ENCODE measurements at regions of chr1 and their contacts with region 1.

Region 1: DNA sequence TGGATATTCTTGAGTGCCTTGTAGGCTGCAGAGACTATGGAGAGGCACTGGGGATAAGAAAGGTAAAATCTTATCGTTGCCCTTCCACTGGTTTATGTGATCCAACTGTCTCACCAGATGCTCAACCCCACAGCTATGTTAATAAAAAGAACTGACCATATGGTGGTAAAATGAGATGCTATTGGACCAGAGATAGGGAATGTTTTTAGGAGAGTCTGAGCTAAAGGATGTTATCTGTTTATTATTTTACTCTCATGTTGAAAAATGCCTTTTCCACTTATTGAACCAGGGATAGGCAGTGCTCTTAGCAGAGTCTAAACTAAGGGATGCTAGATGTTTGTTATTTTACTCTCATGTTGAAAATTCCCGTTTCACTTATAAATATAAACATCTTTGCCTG is 172.8 kb upstream of the GREM2 start:
- DNase-seq: no peak
- ATAC-seq: no peak
- H3K4me3 ChIP-seq: no peak overlapping the region
- H3K27ac ChIP-seq: no peak overlapping the region
- H3K4me1 ChIP-seq: peaks cover 24% of the 10 kb centered on the region
- H3K27me3 ChIP-seq: no peaks in the 10 kb centered on the region
- CTCF ChIP-seq: no peak

Region 2: GRCh38 chr1:240350910-240351331 is 433.9 kb before region 1 on chr1:
- CTCF ChIA-PET with region 1: interaction called, 15 read pairs
- POLR2A ChIA-PET with region 1: no interaction called
- intact Hi-C with region 1: no loop called
- DNase-seq: peak; percentile 74
- ATAC-seq: peak; percentile 69
- H3K4me3 ChIP-seq: no peak overlapping the region
- H3K27ac ChIP-seq: no peak overlapping the region
- H3K4me1 ChIP-seq: peaks cover 13% of the 10 kb centered on the region
- H3K27me3 ChIP-seq: no peaks in the 10 kb centered on the region
- CTCF ChIP-seq: no peak

Region 3: GRCh38 chr1:240803151-240803550 is 18.4 kb after region 1 on chr1:
- CTCF ChIA-PET with region 1: no interaction called
- POLR2A ChIA-PET with region 1: no interaction called
- intact Hi-C with region 1: loop called (anchors 2 kb)
- DNase-seq: peak; percentile 96
- ATAC-seq: peak; percentile 87
- H3K4me3 ChIP-seq: peak overlapping the region; percentile 48
- H3K27ac ChIP-seq: peak overlapping the region; percentile 91
- H3K4me1 ChIP-seq: peaks cover 53% of the 10 kb centered on the region
- H3K27me3 ChIP-seq: no peaks in the 10 kb centered on the region
- CTCF ChIP-seq: no peak

Region 4: GRCh38 chr1:240965581-240966091 is 180.9 kb after region 1 on chr1:
- CTCF ChIA-PET with region 1: no interaction called
- POLR2A ChIA-PET with region 1: no interaction called
- intact Hi-C with region 1: no loop called
- DNase-seq: peak; percentile 69
- ATAC-seq: peak; percentile 69
- H3K4me3 ChIP-seq: no peak overlapping the region
- H3K27ac ChIP-seq: no peak overlapping the region
- H3K4me1 ChIP-seq: peaks cover 10% of the 10 kb centered on the region; the same call in 1 of the 2 replicates
- H3K27me3 ChIP-seq: peaks cover 99% of the 10 kb centered on the region
- CTCF ChIP-seq: no peak

Measured in PC-3 (cell line).